ENCODE measurements at regions of chr15 and their contacts with region 1.

Region 1: GRCh38 chr15:27017168-27017809 is 46.3 kb downstream of the GABRG3 start:
- DNase-seq: peak; percentile 47
- H3K4me3 ChIP-seq: no peak overlapping the region
- H3K27ac ChIP-seq: no peak overlapping the region
- H3K27me3 ChIP-seq: no peaks in the 10 kb centered on the region
- CTCF ChIP-seq: peak; percentile 90

Region 2: GRCh38 chr15:26891448-26892181 is 125.7 kb before region 1 on chr15:
- CTCF ChIA-PET with region 1: interaction called, 52 read pairs
- POLR2A ChIA-PET with region 1: no interaction called
- DNase-seq: no peak
- H3K4me3 ChIP-seq: peak overlapping the region; percentile 47
- H3K27ac ChIP-seq: no peak overlapping the region
- H3K27me3 ChIP-seq: no peaks in the 10 kb centered on the region
- CTCF ChIP-seq: peak; percentile 65